Cardiac septum (tissue), 1 donor: ENCODE measurements at regions of chr1 and their contacts with region 1.

Region 1: GRCh38 chr1:207868774-207869721 is 41.9 kb downstream of the CD34 start:
- DNase-seq: peak; percentile 93

Region 2: DNA sequence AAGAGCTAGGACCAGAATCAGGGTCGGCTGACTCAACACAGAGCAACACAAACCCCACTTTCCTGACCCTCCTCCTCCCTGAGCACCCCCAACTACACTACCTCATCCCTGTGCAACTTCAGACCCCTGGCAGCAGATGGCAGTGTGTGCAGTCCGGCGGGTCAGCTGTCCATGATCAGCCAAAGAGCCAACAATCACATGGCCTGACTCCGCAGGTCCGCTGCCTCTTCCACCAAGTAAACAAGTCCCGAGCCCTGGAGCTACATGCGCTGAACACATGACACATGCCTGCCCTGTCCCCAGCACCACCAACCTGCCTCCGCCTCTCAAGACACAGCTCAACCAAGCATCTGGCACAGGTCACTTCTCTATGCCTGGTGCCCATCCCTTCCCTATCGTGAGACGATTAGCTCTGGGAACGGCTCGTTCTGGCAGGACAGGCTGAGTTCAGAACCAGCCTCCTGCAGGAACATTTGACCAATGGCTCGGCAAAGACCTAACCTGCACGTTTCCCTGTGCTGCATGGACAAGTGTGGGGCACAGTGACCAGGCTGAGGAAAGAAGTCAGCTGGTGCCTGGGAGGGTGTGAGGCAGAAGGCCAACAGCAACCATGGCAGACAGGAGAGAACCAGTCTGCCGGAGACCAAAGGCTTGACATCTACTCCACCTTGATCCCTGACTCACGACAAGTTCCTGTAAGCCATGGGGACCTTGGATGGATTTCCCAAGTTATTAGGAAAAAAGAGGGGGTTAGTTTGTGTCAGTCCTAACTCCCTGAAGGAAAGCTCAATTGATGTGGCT is 56.9 kb before region 1 on chr1:
- intact Hi-C with region 1: loop called (anchors 10 kb)
- DNase-seq: peak; percentile 86

Region 3: DNA sequence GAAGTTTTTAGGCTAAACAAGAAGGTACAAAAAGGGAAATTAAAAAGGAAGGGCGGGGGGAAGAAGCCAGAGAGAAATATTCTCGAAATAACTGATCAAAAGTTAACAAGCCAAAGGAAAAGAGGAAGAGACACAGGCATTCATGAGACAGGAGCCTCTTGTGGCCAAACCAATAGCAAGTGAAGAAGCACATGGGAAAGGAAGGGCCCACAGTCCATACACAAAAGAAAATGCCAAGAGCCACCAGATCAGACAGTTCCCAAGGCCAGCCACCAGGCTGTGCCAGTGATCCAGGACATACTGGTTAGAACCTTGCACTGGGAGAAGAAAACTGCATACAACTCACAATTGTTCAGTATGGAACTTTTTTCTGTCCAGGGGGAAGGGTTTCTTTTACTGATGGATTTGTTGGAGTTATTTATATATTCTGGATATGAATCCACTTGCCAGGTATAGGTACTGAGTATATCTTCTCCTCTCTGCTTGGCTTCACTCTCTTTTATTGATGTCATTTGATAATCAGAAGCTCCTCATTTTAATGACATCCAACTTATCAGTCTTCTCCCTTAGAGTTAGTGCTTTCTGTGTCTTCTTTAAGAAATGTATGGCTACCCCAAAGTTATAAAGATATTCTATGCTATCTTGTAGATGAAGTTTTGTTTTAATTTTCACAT is 40.4 kb before region 1 on chr1:
- intact Hi-C with region 1: loop called (anchors 1 kb)
- DNase-seq: peak; percentile 87

Region 4: GRCh38 chr1:207848234-207848633 is 20.8 kb before region 1 on chr1:
- intact Hi-C with region 1: loop called (anchors 2 kb)
- DNase-seq: peak; percentile 89